ENCODE measurements at regions of chr16 and their contacts with region 1.

Region 1: DNA sequence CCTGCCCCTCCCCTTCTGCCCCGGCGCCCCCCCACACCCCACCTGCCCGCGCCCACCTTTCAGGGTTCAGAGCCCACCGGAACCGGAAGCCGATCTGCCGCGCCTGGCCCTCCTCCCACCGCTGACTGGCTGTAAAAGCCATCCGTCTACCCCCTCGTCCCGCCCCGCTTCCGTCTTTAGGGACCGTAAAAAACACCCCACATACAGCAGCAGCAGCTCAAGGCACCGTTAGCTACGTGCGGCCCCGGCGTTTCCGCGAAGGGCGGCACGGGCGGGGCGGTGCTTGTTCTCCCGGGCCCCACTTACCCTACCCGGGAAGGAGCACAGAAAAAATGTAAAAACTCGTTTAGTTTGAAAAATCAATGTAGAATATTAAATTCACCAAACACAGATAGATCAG is at the start of gene MRPL28:
- DNase-seq: peak; percentile 97
- ATAC-seq: peak; percentile 100
- H3K4me3 Mint-ChIP-seq: peak within 1 kb of the TSS; percentile 68
- H3K27ac Mint-ChIP-seq: peak within 1 kb of the TSS; percentile 87
- H3K4me1 Mint-ChIP-seq: peaks cover 15% of the 10 kb centered on the region
- H3K27me3 Mint-ChIP-seq: no peaks in the 10 kb centered on the region
- total RNA-seq, gene MRPL28: 89.0 to 90.7 TPM

Region 2: DNA sequence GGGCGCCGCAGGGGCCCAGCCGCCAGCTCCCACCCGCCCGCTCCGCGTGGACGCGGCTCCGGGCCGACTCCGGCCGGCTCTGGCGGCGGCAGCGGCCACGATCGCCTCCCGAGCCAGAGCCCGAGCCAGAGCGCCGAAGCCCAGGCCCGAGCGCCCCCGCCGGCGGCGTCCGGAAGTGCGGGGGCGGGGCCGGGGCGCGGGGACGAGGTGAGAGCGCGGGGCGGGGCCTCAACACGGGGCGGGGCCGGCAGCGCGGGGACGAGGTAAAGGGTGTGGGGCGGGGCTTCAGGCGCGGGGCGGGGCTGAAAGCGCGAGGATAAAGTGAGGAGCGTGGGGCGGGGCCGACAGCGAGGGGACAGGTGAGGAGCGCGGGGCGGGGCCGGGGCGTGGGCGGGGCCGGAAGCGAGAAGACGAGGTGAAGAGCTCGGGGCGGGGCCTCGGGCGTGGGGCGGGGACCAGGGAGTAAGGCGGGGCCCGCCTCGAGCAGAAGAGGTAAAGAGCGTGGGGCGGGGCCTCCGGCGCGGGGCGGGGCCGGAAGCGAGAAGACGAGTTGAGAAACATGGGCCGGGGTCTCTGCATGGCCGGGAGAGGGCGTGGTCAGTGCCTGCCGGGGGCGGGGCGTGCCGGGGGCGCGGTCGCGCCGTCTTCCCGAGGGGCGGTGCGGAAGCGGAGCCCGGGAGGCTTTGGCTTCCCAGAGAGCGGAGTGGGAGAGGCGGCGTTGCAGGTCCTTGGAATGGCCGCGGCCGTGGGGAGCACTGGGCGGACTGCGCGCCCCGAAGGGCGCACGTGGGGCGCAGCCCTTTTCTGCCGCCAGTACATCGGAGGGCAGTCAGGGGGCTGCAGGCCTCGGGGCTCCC is 17.7 kb before region 1 on chr16 and contains the start of gene AXIN1:
- CTCF ChIA-PET with region 1: interaction called, 11 read pairs
- DNase-seq: peak; percentile 100
- ATAC-seq: peak; percentile 83
- H3K4me3 Mint-ChIP-seq: peak within 1 kb of the TSS; percentile 79
- H3K27ac Mint-ChIP-seq: peak within 1 kb of the TSS; percentile 77
- H3K4me1 Mint-ChIP-seq: peaks cover 42% of the 10 kb centered on the region
- H3K27me3 Mint-ChIP-seq: no peaks in the 10 kb centered on the region
- total RNA-seq, gene AXIN1: 22.3 to 25.7 TPM